ENCODE measurements at regions of chr5 and their contacts with region 1.

Region 1: GRCh38 chr5:160199410-160199911 is 29.8 kb upstream of the FABP6 start:
- DNase-seq: peak; percentile 45 to 64 (median 58)
- H3K4me3 ChIP-seq: peak overlapping the region; percentile 61
- H3K4me3 Mint-ChIP-seq: peak overlapping the region; percentile 34 to 82 (median 63)
- H3K27ac ChIP-seq: no peak overlapping the region
- H3K27ac Mint-ChIP-seq: no peak overlapping the region
- H3K4me1 ChIP-seq: peaks cover 6% of the 10 kb centered on the region
- H3K4me1 Mint-ChIP-seq: peaks cover 8 to 13% (median 10%) of the 10 kb centered on the region in 3 donors
- H3K27me3 ChIP-seq: no peaks in the 10 kb centered on the region
- H3K27me3 Mint-ChIP-seq: peaks cover 4 to 21% of the 10 kb centered on the region in 2 donors

Region 2: GRCh38 chr5:160342403-160342941 is 143.0 kb after region 1 on chr5:
- CTCF ChIA-PET with region 1: interaction called, 17 read pairs
- POLR2A ChIA-PET with region 1: no interaction called
- DNase-seq: no peak
- H3K4me3 ChIP-seq: no peak overlapping the region
- H3K4me3 Mint-ChIP-seq: no peak overlapping the region
- H3K27ac ChIP-seq: no peak overlapping the region
- H3K27ac Mint-ChIP-seq: peak overlapping the region in 1 of 8 donors; percentile 47
- H3K4me1 ChIP-seq: no peaks in the 10 kb centered on the region
- H3K4me1 Mint-ChIP-seq: peaks cover 0 to 4% (median 4%) of the 10 kb centered on the region in 3 donors
- H3K27me3 ChIP-seq: no peaks in the 10 kb centered on the region
- H3K27me3 Mint-ChIP-seq: peaks cover 3 to 9% of the 10 kb centered on the region in 2 donors

Measured in CD8-positive, alpha-beta memory T cell (primary cell).